Panc1 (cell line): ENCODE measurements at regions of chr6 and their contacts with region 1.

Region 1: DNA sequence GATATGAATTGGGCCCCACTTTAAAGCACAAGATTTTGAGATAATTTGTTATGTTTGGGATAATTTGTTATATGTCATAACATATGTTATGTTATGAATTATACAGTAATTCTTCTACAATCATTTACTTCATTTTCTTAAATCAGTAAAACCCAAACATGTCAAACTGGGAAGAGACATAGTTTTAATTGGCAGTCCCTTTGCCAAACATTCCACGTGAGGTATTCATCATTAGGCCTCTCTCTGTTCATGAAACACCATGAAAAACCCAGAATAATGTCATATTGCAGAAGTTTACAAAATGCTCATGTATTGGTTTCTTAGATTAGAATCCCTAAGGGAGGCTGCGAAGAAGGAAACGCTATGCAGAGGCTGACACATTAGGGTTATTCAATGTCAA is 89.4 kb upstream of the PDE10A start:
- DNase-seq: no peak
- ATAC-seq: no peak
- H3K4me3 ChIP-seq: no peak overlapping the region
- H3K27ac ChIP-seq: no peak overlapping the region
- H3K4me1 ChIP-seq: no peaks in the 10 kb centered on the region
- H3K27me3 ChIP-seq: no peaks in the 10 kb centered on the region
- CTCF ChIP-seq: no peak

Region 2: DNA sequence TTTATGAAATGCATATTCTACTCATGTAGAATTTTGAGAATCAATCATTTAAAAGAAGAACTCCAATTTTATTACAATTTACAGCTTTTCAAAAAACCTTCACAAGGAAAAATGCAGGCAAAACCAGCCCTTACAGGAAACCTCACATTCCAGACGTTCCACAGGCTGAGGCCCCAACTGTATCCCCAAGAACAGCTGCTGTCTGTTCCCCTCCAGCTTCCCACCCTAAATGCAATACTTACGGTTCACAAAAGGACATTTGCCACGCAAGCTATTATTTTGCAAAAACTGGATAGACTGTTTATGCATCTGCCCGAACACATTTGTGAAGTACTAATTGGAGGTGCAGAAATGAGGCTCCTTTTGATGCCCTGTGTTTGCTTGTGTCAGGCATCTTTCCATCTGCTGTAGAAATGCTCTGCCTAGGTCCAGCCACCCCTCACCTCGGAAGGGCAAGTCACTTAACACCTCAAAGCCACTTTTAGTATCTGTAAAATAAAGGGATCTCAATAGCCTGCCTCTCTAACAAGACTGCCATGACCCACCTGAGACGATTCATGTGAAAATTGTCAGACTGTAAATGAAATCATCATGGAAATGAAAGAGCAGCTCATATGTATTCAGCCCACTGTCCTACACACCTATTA is 115.9 kb before region 1 on chr6:
- CTCF ChIA-PET with region 1: interaction called, 12 read pairs
- POLR2A ChIA-PET with region 1: no interaction called
- in situ Hi-C with region 1: no loop called
- intact Hi-C with region 1: no loop called
- DNase-seq: no peak
- ATAC-seq: 0 out of 2 replicates have a peak, but pooled peaks have one; percentile 13
- H3K4me3 ChIP-seq: no peak overlapping the region
- H3K27ac ChIP-seq: peak overlapping the region; percentile 59; the same call in 1 of the 2 replicates
- H3K4me1 ChIP-seq: peaks cover 62% of the 10 kb centered on the region
- H3K27me3 ChIP-seq: no peaks in the 10 kb centered on the region
- CTCF ChIP-seq: no peak